ENCODE measurements at regions of chr5 and their contacts with region 1.

Region 1: DNA sequence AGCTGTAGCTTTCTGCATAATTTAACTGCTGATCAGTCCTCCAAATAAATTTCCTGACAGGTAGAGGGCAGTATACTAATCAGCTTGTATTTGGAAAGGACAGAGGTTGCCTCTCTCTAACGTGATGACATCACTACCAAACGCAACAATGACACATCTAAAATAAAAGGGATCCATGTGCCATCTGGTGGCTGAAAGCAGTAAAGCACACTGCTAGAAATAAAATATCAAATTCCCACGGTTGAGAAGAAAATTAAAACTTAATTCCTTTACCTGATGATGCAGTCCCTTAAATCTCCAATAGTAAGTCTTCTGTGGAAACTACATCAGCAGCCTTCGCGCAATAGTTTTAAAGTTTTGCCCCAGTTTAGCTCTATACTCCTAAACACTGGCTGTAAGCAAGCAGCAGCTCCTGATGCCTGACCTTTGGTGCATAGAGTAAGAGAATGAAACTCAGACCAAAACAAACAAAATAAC is 54.5 kb downstream of the DIAPH1 start:
- DNase-seq: no peak
- ATAC-seq: peak; percentile 66 to 74 (median 68)
- H3K4me3 ChIP-seq: no peak overlapping the region
- H3K27ac ChIP-seq: peak overlapping the region; percentile 61
- H3K4me1 ChIP-seq: peaks cover 19% of the 10 kb centered on the region
- H3K27me3 ChIP-seq: no peaks in the 10 kb centered on the region
- CTCF ChIP-seq: peak; percentile 91

Region 2: GRCh38 chr5:141094481-141095262 is 469.6 kb before region 1 on chr5 and contains the start of gene PCDHB2:
- intact Hi-C with region 1: loop called in 1 of 2 experiments (anchors 10 kb)
- DNase-seq: peak; percentile 39 to 53
- ATAC-seq: peak in 3 of 4 donors; percentile 39 to 62 (median 46)
- H3K4me3 ChIP-seq: peak within 1 kb of the TSS; percentile 55
- H3K27ac ChIP-seq: no peak within 1 kb of the TSS
- H3K4me1 ChIP-seq: no peaks in the 10 kb centered on the region
- H3K27me3 ChIP-seq: peaks cover 0 to 23% (median 11%) of the 10 kb centered on the region in 3 donors
- CTCF ChIP-seq: peak; percentile 25
- total RNA-seq, gene PCDHB2: 0.88 to 1.6 (median 1.2) TPM

Region 3: GRCh38 chr5:141245250-141245717 is 319.0 kb before region 1 on chr5 and contains the start of gene PCDHB15:
- intact Hi-C with region 1: loop called in 1 of 2 experiments (anchors 10 kb)
- DNase-seq: no peak
- ATAC-seq: peak in 1 of 4 donors; percentile 42
- H3K4me3 ChIP-seq: peak within 1 kb of the TSS; percentile 52
- H3K27ac ChIP-seq: no peak within 1 kb of the TSS
- H3K4me1 ChIP-seq: no peaks in the 10 kb centered on the region
- H3K27me3 ChIP-seq: peaks cover 0 to 32% (median 15%) of the 10 kb centered on the region in 3 donors
- CTCF ChIP-seq: no peak
- total RNA-seq, gene PCDHB15: 0.50 to 2.5 (median 0.91) TPM

Region 4: GRCh38 chr5:141338538-141339306 is 225.5 kb before region 1 on chr5 and contains the start of gene PCDHGA2:
- intact Hi-C with region 1: loop called in 1 of 2 experiments (anchors 5 kb)
- DNase-seq: no peak
- ATAC-seq: peak; percentile 77 to 82 (median 80)
- H3K4me3 ChIP-seq: peak within 1 kb of the TSS; percentile 60
- H3K27ac ChIP-seq: peak within 1 kb of the TSS; percentile 64
- H3K4me1 ChIP-seq: no peaks in the 10 kb centered on the region
- H3K27me3 ChIP-seq: peaks cover 0 to 33% (median 9%) of the 10 kb centered on the region in 3 donors
- CTCF ChIP-seq: peak; percentile 39
- total RNA-seq, gene PCDHGA2: 1.2 to 1.8 (median 1.6) TPM

Region 5: DNA sequence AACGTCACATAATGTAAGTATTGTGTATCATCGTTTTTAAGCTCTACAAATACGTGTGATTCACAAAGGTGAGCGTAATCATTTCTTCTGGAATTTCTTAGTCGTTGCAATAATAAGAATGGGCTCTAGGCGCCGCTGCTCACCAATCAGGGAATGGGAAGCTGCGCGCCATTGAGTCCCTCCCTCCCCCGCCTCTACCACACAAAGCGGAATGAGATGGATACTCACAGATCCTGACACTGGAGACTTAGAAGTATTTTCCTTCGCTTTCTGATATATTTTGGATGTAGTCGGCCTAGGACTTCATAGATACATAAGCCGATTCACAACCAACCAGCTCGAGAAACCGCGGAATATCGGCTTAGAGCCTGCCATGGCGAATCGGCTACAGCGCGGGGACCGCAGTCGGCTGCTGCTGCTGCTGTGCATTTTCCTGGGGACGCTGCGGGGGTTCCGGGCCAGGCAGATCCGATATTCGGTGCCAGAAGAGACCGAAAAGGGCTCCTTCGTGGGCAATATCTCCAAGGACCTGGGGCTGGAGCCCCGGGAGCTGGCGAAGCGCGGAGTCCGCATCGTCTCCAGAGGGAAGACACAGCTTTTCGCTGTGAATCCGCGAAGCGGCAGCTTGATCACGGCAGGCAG is 143.3 kb before region 1 on chr5 and contains the start of gene PCDHGA11:
- intact Hi-C with region 1: loop called (anchors 5 kb)
- DNase-seq: peak in 1 of 2 donors; percentile 29
- ATAC-seq: peak; percentile 49 to 73 (median 66)
- H3K4me3 ChIP-seq: peak within 1 kb of the TSS; percentile 66
- H3K27ac ChIP-seq: peak within 1 kb of the TSS; percentile 7
- H3K4me1 ChIP-seq: no peaks in the 10 kb centered on the region
- H3K27me3 ChIP-seq: peaks cover 0 to 29% (median 6%) of the 10 kb centered on the region in 3 donors
- CTCF ChIP-seq: peak; percentile 68
- total RNA-seq, gene PCDHGA11: 0.94 to 4.4 (median 2.9) TPM

Region 6: GRCh38 chr5:141496038-141496437 is 68.2 kb before region 1 on chr5:
- intact Hi-C with region 1: no loop called
- DNase-seq: no peak
- ATAC-seq: no peak
- H3K4me3 ChIP-seq: no peak overlapping the region
- H3K27ac ChIP-seq: no peak overlapping the region
- H3K4me1 ChIP-seq: no peaks in the 10 kb centered on the region
- H3K27me3 ChIP-seq: peaks cover 0 to 5% (median 0%) of the 10 kb centered on the region in 3 donors
- CTCF ChIP-seq: no peak

Measured in psoas muscle (tissue), 8 donors.